ENCODE measurements at regions of chr4 and their contacts with region 1.

Region 1: DNA sequence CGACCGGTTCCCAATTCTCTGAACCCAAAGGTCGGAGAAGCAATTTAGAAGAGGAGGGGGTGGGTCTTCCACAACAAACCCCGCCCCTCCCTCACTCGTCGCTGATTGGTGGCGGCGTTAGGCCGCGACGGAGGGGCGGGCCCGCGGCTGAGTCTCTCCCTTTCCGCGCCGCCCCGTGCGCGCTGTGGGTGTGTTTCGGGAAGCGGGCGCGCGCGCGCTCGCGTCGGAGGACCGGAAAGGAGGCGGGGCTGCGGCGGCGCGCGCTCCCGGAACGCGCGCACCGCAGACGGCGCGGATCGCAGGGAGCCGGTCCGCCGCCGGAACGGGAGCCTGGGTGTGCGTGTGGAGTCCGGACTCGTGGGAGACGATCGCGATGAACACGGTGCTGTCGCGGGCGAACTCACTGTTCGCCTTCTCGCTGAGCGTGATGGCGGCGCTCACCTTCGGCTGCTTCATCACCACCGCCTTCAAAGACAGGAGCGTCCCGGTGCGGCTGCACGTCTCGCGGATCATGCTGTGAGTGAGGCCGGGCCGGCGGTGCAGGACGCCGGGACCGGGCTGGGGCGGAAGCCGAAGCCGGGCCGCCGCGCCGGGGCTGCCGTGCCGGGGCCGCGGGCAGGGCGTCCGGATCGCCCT is at the start of gene SPCS3:
- H3K4me3 Mint-ChIP-seq: peak within 1 kb of the TSS; percentile 87
- H3K27ac Mint-ChIP-seq: peak within 1 kb of the TSS; percentile 91
- H3K4me1 Mint-ChIP-seq: peaks cover 42% of the 10 kb centered on the region
- H3K27me3 Mint-ChIP-seq: no peaks in the 10 kb centered on the region

Region 2: DNA sequence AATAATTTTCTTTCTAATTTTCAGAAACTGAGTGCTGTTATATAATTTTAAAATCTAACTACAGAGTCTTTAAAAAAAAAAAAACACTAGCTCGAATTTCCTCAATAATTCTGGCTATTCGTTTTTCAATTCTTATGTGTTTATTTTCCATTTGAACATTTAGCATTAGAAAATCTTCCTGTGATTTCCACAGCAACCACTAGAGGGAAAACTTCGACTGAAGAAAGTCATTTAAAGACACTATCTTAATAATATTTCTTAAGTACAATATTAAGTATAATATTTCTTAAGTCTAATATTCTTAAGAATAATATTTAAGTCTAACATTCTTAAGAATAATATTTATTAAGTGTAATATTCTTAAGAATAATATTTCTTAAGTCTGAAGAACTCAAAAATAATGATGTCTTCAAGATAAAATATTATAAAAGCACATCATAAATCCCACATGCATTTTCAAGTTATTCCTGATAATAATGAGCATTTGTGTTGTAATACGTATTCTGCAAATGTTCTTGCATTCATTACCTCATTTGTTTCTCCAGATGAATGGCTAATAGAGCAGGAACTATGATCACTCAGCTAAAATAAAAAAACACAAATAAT is 372.6 kb before region 1 on chr4:
- intact Hi-C with region 1: loop called (anchors 10 kb)
- H3K4me3 Mint-ChIP-seq: peak overlapping the region; percentile 58
- H3K27ac Mint-ChIP-seq: peak overlapping the region; percentile 61
- H3K4me1 Mint-ChIP-seq: peaks cover 7% of the 10 kb centered on the region
- H3K27me3 Mint-ChIP-seq: no peaks in the 10 kb centered on the region

Region 3: DNA sequence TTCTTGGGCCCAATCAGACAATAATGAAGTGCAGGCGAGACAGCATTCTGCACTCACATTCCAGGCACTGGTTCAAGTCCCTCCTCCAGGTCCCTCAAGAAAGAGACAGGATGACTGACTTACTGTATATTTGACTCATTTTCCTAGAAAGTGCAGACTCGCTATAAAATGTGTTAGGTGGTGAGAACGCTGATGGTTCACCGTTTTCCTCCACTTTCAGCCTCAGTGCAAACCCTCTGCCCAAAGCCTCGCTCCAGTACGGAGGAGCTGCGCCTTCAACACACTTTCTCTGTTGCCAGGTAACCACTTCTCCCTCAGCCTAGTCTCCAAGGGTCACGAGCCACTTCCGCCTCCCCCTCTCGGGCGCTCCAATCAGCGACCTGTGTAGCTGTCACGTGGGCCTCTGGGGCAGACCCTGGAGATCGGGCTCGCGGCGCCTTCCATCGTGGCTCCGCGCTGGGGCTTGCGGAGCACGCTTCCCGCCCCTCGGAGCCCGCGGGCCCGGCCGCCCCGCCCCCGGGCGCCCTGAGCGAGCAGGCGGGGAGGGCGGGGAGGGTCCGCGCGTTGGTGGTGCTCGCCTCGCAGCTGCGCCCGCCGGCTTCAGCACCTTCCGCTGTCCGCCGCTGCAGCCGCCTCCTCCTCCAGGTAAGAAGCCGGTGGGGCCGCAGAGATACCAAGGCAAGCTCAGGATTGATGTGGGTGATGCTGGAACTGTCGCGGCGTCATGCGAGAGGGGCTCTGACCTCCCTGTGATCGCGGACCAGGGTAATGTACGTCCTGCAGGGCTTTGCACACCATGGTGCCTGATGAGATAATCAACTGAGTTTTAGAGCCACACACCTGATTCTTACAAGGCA is 254.2 kb before region 1 on chr4 and contains the start of gene WDR17:
- intact Hi-C with region 1: loop called (anchors 10 kb)
- H3K4me3 Mint-ChIP-seq: peak within 1 kb of the TSS; percentile 93
- H3K27ac Mint-ChIP-seq: peak within 1 kb of the TSS; percentile 47
- H3K4me1 Mint-ChIP-seq: peaks cover 13% of the 10 kb centered on the region
- H3K27me3 Mint-ChIP-seq: peaks cover 18% of the 10 kb centered on the region

Region 4: GRCh38 chr4:176195184-176195978 is 124.4 kb before region 1 on chr4 and contains the start of gene SPATA4:
- intact Hi-C with region 1: loop called (anchors 1 kb)
- H3K4me3 Mint-ChIP-seq: peak within 1 kb of the TSS; percentile 91
- H3K27ac Mint-ChIP-seq: peak within 1 kb of the TSS; percentile 88
- H3K4me1 Mint-ChIP-seq: peaks cover 11% of the 10 kb centered on the region
- H3K27me3 Mint-ChIP-seq: peaks cover 12% of the 10 kb centered on the region

Region 5: DNA sequence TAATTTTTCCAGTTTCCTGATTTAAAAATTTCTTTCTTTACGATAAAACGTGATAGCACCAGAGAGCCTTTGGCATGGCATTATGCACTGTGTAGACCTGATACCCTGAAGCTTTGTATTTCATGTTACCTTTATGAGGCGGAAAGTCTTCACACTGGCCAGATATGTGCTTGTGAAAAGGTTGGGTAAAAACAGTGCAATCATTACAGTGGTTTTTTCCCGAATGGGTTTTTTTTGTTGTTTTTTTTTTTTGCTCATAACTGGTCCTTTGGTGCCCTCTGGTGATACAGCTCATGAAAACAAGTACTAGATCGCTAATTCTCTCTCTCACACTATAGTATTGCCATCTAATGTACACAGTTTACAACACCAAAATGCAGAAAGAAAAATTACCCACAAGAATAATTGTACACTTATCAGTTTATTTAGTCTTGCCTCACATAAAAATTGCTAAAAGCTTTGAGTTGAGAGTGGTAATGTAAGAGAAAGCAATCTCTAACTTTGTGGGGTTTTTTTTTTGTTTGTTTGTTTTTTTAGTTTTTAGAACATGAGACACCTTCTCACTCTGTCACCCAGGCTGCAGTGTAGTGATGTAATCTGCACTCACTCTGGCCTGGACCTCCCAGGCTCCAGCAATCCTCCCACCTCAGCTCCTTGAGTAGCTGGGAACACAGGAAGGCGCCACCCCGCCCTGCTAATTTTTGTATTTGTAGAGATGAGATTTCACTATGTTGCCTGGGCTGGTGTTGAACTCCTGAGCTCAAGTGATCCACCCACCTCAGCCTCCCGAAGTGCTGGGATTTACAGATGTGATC is 21.3 kb after region 1 on chr4:
- intact Hi-C with region 1: loop called (anchors 1 kb)
- H3K4me3 Mint-ChIP-seq: no peak overlapping the region
- H3K27ac Mint-ChIP-seq: no peak overlapping the region
- H3K4me1 Mint-ChIP-seq: no peaks in the 10 kb centered on the region
- H3K27me3 Mint-ChIP-seq: no peaks in the 10 kb centered on the region

Region 6: DNA sequence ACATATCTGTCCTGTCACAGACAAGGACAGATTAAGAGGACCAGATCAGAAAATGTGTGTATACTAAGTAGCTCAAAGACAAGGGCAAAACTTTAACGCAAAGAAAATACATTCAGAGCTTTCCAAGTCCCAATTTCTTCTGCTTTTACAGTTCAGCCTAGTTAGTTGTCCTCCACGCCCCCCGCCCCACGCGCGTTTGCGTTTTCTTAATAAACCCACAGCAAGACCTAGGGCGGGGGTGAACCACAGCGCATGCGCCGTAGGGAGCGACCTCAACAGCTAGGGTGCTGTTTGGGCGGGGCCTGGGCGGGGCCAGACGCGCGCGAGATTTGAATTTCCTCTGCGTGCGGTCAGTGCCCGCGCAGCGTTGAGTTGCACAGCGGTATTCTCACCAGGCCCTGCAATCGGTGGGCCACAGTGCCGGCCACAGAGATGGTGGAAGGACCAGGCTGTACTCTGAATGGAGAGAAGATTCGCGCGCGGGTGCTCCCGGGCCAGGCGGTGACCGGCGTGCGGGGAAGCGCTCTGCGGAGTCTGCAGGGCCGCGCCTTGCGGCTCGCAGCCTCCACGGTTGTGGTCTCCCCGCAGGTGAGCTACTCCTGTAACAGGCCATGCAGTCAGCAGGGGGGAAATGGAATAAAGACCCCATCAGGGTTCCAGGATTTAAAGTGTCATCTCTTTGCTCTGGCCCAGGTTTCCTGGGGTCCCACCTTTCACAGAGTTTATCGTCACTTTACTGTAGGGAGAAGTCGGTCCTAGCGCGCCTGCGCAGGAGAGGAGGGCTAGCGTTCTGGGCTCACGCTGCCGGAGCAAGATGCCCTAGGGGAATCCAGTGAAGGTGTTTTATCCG is 989.9 kb after region 1 on chr4 and contains the start of gene NEIL3:
- intact Hi-C with region 1: loop called (anchors 10 kb)
- H3K4me3 Mint-ChIP-seq: peak within 1 kb of the TSS; percentile 98
- H3K27ac Mint-ChIP-seq: peak within 1 kb of the TSS; percentile 79
- H3K4me1 Mint-ChIP-seq: peaks cover 26% of the 10 kb centered on the region
- H3K27me3 Mint-ChIP-seq: no peaks in the 10 kb centered on the region

Measured in dendritic cell treated with granulocyte-macrophage colony-stimulating factor and Interleukin-4, amounts not matched to agents 40 ng/mL and 50 ng/mL, for 4 days (primary cell).